ENCODE measurements at regions of chr4 and their contacts with region 1.

Region 1: GRCh38 chr4:47531241-47531953 is 46.3 kb downstream of the ATP10D start:
- DNase-seq: peak; percentile 90
- ATAC-seq: peak; percentile 88
- H3K4me3 ChIP-seq: no peak overlapping the region
- H3K27ac ChIP-seq: peak overlapping the region; percentile 39
- H3K4me1 ChIP-seq: peaks cover 13% of the 10 kb centered on the region
- H3K27me3 ChIP-seq: no peaks in the 10 kb centered on the region
- CTCF ChIP-seq: no peak
- POLR2A ChIP-seq: no peak
- RAD21 ChIP-seq: no peak

Region 2: DNA sequence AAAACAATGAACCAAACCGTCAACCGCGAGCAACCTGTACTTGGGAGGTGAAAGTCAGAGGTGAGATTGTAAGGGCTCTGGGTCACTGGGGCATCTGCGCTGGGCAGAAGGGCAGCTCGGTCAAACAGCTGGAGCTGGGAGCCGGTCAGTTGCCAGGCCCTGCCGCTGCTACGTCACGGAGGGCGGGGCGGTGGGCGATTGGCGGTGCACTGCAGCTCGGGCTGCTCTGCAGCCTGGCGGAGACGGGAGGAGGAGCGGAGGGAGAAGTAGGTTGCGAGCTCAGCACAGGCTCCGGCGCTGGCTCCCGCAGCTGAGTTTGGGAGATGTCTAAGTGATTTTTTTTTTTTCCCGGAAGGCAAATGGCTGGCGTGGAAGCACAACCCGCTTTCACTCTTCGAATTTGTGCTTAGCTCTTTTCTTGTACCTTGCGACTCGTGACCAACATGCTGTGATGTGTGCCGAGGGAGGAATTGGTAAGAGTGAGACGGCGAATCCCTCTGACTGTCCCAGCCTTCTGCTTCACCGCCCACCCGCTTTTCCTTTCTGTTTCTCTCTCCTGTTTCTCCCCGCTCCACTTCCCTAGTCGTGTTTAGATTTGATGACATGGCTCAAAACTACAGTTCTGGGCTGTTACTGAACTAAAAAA is 46.2 kb before region 1 on chr4 and contains the start of gene ATP10D:
- CTCF ChIA-PET with region 1: no interaction called
- POLR2A ChIA-PET with region 1: no interaction called
- dilution Hi-C with region 1: no loop called
- in situ Hi-C with region 1: no loop called
- intact Hi-C with region 1: loop called (anchors 5 kb)
- DNase-seq: peak; percentile 93
- ATAC-seq: peak; percentile 99
- H3K4me3 ChIP-seq: peak within 1 kb of the TSS; percentile 71
- H3K27ac ChIP-seq: peak within 1 kb of the TSS; percentile 87
- H3K4me1 ChIP-seq: peaks cover 5% of the 10 kb centered on the region
- H3K27me3 ChIP-seq: no peaks in the 10 kb centered on the region
- CTCF ChIP-seq: peak; percentile 23; the same call in 1 of the 2 replicates
- POLR2A ChIP-seq: peak; percentile 96
- RAD21 ChIP-seq: peak; percentile 21; the same call in 1 of the 2 replicates
- total RNA-seq, gene ATP10D: 90.3 and 135 TPM in 2 replicates

Region 3: DNA sequence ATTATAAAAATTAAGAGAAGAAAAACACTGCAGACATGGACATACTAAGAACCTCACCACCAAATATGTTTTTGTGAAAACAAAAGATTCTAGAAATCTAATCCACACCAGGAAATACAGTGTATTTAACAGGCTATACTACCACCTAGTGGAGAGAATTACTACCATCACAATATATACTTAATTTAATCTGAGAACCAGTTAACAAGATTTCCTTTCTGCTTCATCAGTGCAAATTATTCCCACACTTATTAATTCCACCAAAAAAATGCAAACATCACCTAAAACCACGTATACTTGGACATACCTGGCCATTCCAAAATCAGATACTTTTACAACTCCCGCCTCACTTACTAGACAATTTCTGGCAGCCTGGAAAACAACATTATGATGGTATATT is 609.7 kb after region 1 on chr4:
- CTCF ChIA-PET with region 1: no interaction called
- POLR2A ChIA-PET with region 1: no interaction called
- dilution Hi-C with region 1: no loop called
- in situ Hi-C with region 1: no loop called
- intact Hi-C with region 1: no loop called
- DNase-seq: peak; percentile 56
- ATAC-seq: peak; percentile 84
- H3K4me3 ChIP-seq: no peak overlapping the region
- H3K27ac ChIP-seq: no peak overlapping the region
- H3K4me1 ChIP-seq: no peaks in the 10 kb centered on the region
- H3K27me3 ChIP-seq: no peaks in the 10 kb centered on the region
- CTCF ChIP-seq: peak; percentile 65
- POLR2A ChIP-seq: no peak
- RAD21 ChIP-seq: peak; percentile 63

Measured in IMR-90 (cell line).